Mammary epithelial cell (primary cell): ENCODE measurements at regions of chr11 and their contacts with region 1.

Region 1: GRCh38 chr11:70176940-70177689 is 26.0 kb upstream of the FADD start:
- DNase-seq: no peak
- H3K4me3 ChIP-seq: no peak overlapping the region
- H3K27ac ChIP-seq: no peak overlapping the region
- H3K4me1 ChIP-seq: peaks cover 11% of the 10 kb centered on the region
- H3K27me3 ChIP-seq: no peaks in the 10 kb centered on the region
- CTCF ChIP-seq: peak; percentile 61 to 66

Region 2: DNA sequence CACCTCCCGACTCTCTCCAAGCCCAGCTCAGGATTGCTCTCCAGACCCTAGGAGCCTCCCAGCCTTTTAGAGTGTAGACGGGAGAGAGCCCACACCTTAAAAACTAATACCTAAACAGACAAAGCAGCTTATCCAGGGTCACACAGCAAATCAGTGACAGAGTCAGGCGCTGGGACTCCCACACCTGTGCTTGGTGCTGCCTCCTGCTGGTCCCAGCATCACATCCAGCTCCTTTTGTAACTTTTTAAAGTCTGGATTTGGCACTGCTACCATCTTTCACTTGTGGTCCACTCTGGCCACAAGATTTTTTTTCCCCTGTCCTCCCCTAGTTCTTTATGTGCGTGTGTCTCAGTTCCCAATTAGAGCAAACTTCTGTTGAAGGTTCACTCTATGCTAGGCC is 94.3 kb before region 1 on chr11:
- CTCF ChIA-PET with region 1: no interaction called
- dilution Hi-C with region 1: no loop called
- in situ Hi-C with region 1: no loop called
- intact Hi-C with region 1: no loop called
- DNase-seq: no peak
- H3K4me3 ChIP-seq: no peak overlapping the region
- H3K27ac ChIP-seq: no peak overlapping the region
- H3K4me1 ChIP-seq: peaks cover 49% of the 10 kb centered on the region
- H3K27me3 ChIP-seq: no peaks in the 10 kb centered on the region
- CTCF ChIP-seq: peak; percentile 37 to 51

Region 3: DNA sequence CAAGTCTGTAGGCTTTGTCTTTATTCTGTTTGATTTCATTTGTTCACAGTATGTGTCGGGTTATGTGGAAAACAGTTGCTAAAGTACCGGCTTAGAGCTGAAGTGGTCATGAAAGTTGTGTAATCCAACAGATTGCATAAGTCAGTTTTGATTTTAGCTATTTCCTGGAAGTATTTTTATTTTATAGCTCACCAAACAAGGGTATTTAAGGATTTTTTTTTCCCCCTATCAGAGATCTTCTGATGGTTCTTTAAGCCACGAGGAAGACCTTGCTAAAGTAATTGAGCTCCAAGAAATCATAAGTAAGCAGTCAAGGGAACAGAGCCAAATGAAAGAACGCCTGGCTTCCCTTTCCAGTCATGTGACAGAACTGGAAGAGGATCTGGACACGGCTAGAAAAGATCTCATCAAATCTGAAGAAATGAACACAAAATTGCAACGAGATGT is 149.3 kb after region 1 on chr11:
- CTCF ChIA-PET with region 1: interaction called, 10 read pairs
- dilution Hi-C with region 1: no loop called
- in situ Hi-C with region 1: no loop called
- intact Hi-C with region 1: no loop called
- DNase-seq: no peak
- H3K4me3 ChIP-seq: no peak overlapping the region
- H3K27ac ChIP-seq: no peak overlapping the region
- H3K4me1 ChIP-seq: peaks cover 8% of the 10 kb centered on the region
- H3K27me3 ChIP-seq: no peaks in the 10 kb centered on the region
- CTCF ChIP-seq: no peak